ENCODE measurements at regions of chr1 and their contacts with region 1.

Region 1: DNA sequence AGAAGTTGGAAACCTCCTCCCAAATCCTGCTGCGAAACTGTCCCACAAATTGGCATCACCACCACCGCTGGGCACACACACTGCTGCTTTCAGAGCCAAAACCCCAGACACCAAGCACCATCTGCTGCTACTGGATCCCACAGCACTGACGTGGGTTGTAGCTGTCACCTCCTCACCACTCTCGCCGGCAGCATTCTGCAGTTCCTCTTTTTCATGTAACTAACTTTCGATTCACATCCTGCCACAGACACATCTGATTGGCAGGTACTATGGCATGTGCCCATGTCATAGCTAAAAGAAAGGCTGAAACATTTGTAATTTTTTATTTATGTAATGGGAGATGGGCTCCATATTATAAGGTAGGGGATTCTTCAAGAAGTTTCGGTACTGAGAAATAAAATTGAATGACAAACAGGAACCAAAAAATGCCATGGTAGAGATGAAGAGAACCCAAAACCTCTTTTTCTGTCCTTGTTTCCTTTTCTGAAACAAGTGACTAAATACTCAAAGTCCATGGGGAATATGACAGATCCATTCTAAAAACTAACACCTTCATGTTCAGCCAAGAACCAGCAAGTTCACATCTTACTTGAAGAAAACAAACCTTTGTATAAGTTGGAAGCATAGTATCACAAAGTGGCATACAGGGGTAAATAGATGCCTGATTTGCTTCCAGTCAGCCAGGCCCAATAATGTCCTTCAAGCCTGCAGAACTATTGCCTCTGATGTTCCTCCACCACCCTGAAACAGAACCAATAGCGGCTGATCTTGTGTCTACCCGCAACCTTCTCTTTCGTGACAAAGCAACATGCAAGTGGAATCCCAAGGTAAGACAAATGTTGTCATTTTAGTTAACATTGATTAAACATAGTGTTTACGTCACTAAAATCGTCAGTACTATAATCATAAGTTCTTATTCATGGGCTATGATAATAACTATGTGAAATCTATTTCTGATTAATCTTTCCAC is 26.6 kb upstream of the RGS13 start:
- DNase-seq: peak; percentile 44 to 63 (median 50)
- ATAC-seq: peak; percentile 47 to 78 (median 68)
- H3K4me3 ChIP-seq: no peak overlapping the region
- H3K27ac ChIP-seq: no peak overlapping the region
- H3K4me1 ChIP-seq: no peaks in the 10 kb centered on the region
- H3K27me3 ChIP-seq: no peaks in the 10 kb centered on the region
- CTCF ChIP-seq: no peak
- POLR2A ChIP-seq: no peak

Region 2: GRCh38 chr1:192477630-192478029 is 131.8 kb before region 1 on chr1:
- intact Hi-C with region 1: loop called (anchors 10 kb)
- DNase-seq: no peak
- ATAC-seq: peak; percentile 67 to 85 (median 76)
- H3K4me3 ChIP-seq: no peak overlapping the region
- H3K27ac ChIP-seq: no peak overlapping the region
- H3K4me1 ChIP-seq: no peaks in the 10 kb centered on the region
- H3K27me3 ChIP-seq: no peaks in the 10 kb centered on the region
- CTCF ChIP-seq: peak; percentile 60 to 67 (median 62)
- POLR2A ChIP-seq: no peak